ENCODE measurements at regions of chr13 and their contacts with region 1.

Region 1: GRCh38 chr13:36273431-36273830 is 24.2 kb downstream of the CCDC169 start:
- DNase-seq: no peak
- ATAC-seq: no peak
- H3K4me3 ChIP-seq: no peak overlapping the region
- H3K27ac ChIP-seq: no peak overlapping the region
- H3K4me1 ChIP-seq: no peaks in the 10 kb centered on the region
- H3K27me3 ChIP-seq: no peaks in the 10 kb centered on the region
- CTCF ChIP-seq: no peak

Region 2: GRCh38 chr13:35978603-35979316 is 294.7 kb before region 1 on chr13:
- intact Hi-C with region 1: loop called in 1 of 2 experiments (anchors 5 kb)
- DNase-seq: peak in 2 of 4 donors; percentile 53 to 70
- ATAC-seq: peak; percentile 81
- H3K4me3 ChIP-seq: no peak overlapping the region
- H3K27ac ChIP-seq: peak overlapping the region in 1 of 2 donors; percentile 83
- H3K4me1 ChIP-seq: peaks cover 3 to 5% of the 10 kb centered on the region in 2 donors
- H3K27me3 ChIP-seq: no peaks in the 10 kb centered on the region
- CTCF ChIP-seq: peak; percentile 53 to 77

Region 3: GRCh38 chr13:36107521-36108107 is 165.8 kb before region 1 on chr13:
- intact Hi-C with region 1: no loop called
- DNase-seq: no peak
- ATAC-seq: no peak
- H3K4me3 ChIP-seq: no peak overlapping the region
- H3K27ac ChIP-seq: no peak overlapping the region
- H3K4me1 ChIP-seq: no peaks in the 10 kb centered on the region
- H3K27me3 ChIP-seq: no peaks in the 10 kb centered on the region
- CTCF ChIP-seq: no peak

Measured in left lung (tissue), 14 donors.